WTC11 (cell line): ENCODE measurements at regions of chr19 and their contacts with region 1.

Region 1: DNA sequence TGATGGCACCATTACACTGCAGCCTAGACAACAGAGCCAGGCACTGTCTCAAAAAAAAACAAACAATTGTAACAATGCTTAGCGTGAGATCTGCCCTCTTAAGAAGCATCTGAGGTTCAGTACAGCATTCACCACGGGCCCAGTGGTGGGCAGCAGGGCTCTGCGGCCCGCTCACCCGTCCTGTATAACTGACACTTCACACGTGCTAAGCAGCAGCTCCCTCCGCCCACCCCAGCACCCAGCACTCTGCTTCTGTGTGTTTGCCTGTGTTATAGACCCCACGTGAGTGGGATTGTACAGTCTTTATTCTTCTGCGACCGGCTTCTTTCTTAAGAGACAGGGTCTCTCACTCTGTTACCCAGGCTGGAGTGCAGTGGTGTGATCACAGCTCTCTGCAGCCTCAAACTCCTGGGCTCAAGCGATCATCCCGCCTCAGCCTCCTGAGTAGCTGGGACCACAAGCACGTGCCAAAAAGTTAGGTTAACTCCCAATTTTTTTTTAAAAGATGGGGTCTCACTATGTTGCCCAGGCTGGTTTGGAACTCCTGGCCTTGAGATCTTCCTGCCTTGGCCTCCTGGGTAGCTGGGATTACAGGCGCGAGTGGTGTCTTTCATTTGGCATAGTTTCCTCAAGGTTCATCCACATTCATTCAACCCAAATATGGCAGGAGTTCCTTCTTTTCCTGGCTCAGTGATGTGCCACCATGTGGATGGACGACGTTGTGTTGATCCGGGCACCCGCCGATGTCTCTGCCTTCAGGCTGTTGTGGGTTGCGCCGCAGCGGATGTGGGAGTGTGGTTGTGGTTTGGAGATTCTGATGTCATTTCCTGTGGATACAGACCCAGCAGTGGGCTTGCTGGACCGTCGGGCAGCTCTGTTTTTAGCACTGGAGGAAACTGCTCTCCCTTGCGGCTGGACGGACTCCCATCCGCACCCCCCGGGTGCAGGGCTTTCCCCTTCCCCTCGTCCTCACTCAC is 170.0 kb downstream of the KDM4B start:
- DNase-seq: no peak
- ATAC-seq: no peak
- H3K4me3 Mint-ChIP-seq: no peak overlapping the region
- H3K27ac Mint-ChIP-seq: no peak overlapping the region
- H3K4me1 Mint-ChIP-seq: no peaks in the 10 kb centered on the region
- H3K27me3 Mint-ChIP-seq: no peaks in the 10 kb centered on the region
- CTCF ChIP-seq: no peak

Region 2: GRCh38 chr19:5023128-5023571 is 115.7 kb before region 1 on chr19:
- CTCF ChIA-PET with region 1: no interaction called
- POLR2A ChIA-PET with region 1: no interaction called
- DNase-seq: no peak
- ATAC-seq: no peak
- H3K4me3 Mint-ChIP-seq: no peak overlapping the region
- H3K27ac Mint-ChIP-seq: peak overlapping the region; percentile 90
- H3K4me1 Mint-ChIP-seq: 0 out of 2 replicates have a peak, but pooled peaks cover 2% of the 10 kb centered on the region
- H3K27me3 Mint-ChIP-seq: no peaks in the 10 kb centered on the region
- CTCF ChIP-seq: no peak

Region 3: DNA sequence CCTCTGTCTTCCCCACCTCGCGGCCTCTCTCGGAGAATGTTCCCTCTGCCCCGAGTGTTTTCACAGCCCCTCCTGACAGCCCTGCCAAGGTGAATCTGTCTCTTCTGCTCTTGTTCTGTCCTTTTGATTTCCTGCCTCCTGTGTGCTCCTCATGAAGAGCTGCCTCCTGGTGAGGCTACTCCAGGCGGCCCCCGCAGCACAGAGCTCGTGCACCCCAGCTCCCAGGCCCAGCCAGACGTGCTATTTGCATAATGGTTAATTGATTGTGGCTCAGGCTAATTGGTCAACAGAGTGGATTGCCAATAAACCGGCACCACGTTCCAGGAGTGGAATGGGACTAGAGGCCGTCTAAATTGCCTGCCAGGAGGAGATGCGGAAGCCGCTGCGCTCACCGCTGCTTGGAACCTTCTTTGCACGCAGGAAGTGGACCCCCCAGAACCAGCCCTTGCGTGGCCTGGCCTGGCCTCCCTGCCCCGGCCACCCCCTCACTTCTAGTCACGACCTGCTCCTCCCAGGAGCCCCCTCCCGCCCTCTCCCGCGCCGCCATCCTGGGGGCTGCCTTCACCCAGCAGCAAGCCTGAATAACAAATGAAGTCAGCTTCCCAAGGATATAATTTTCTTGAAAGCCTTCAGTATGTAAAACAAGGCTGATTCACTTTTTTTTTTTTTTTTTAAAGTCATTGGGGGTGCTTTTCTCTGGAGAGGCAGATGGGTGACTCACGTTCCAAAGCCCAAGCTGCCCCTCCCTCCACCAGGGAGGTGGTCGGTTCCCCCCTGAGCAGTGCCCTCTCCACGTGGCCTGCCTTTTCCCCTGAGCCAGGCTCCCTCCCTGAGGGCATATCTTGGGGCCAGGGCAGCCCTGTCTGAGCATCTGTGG is 26.0 kb before region 1 on chr19:
- CTCF ChIA-PET with region 1: interaction called, 19 read pairs
- POLR2A ChIA-PET with region 1: no interaction called
- DNase-seq: no peak
- ATAC-seq: no peak
- H3K4me3 Mint-ChIP-seq: no peak overlapping the region
- H3K27ac Mint-ChIP-seq: peak overlapping the region; percentile 83
- H3K4me1 Mint-ChIP-seq: peaks cover 30% of the 10 kb centered on the region
- H3K27me3 Mint-ChIP-seq: no peaks in the 10 kb centered on the region
- CTCF ChIP-seq: no peak

Region 4: DNA sequence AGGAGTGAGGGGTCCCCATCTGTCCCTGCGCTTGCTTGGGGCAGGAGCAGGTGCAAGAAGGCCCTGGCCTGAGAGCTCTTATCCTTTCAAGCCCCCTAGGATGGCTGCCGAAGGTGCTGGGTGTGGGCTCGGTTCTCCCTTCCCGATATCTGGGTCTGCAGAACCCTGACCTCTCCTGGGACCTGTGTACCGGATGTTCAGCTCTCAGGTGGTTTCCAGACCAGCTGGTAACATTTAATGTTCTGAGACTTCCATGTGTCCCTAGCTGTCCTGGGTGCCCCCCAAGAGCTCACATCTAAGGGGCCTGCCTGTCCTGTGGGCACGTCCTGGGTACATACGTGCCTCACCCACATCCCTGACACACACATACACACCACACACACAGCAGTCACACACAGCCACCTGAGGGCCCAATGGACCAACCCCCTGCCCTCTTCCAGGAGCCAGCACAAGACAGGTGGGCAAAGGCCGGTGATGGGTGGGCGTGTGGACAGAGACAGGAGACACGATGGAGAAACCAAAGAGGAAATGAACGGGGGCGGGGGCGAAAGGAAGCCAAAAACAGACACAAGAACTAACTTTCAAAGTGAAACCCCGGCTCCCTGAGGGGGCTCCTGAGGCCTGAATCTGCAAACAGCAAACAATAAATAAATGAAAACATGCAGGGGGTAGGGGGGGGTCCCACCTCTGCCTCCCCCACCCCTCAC is 77.4 kb after region 1 on chr19:
- CTCF ChIA-PET with region 1: no interaction called
- POLR2A ChIA-PET with region 1: no interaction called
- DNase-seq: no peak
- ATAC-seq: no peak
- H3K4me3 Mint-ChIP-seq: no peak overlapping the region
- H3K27ac Mint-ChIP-seq: no peak overlapping the region
- H3K4me1 Mint-ChIP-seq: no peaks in the 10 kb centered on the region
- H3K27me3 Mint-ChIP-seq: no peaks in the 10 kb centered on the region
- CTCF ChIP-seq: no peak

Region 5: GRCh38 chr19:5231857-5232503 is 93.1 kb after region 1 on chr19:
- CTCF ChIA-PET with region 1: no interaction called
- POLR2A ChIA-PET with region 1: no interaction called
- DNase-seq: no peak
- ATAC-seq: no peak
- H3K4me3 Mint-ChIP-seq: no peak overlapping the region
- H3K27ac Mint-ChIP-seq: no peak overlapping the region
- H3K4me1 Mint-ChIP-seq: no peaks in the 10 kb centered on the region; the same call in 1 of the 2 replicates
- H3K27me3 Mint-ChIP-seq: no peaks in the 10 kb centered on the region
- CTCF ChIP-seq: no peak